ENCODE measurements at regions of chr15 and their contacts with region 1.

Region 1: GRCh38 chr15:50260969-50261496 is 4.5 kb downstream of the HDC start:
- DNase-seq: no peak
- H3K4me3 Mint-ChIP-seq: peak overlapping the region; percentile 64
- H3K27ac Mint-ChIP-seq: peak overlapping the region; percentile 98
- H3K4me1 Mint-ChIP-seq: peaks cover 76% of the 10 kb centered on the region
- H3K27me3 Mint-ChIP-seq: no peaks in the 10 kb centered on the region

Region 2: GRCh38 chr15:48877630-48878595 is 1383.1 kb before region 1 on chr15 and contains the start of gene EID1:
- intact Hi-C with region 1: loop called (anchors 5 kb)
- DNase-seq: peak; percentile 95
- H3K4me3 Mint-ChIP-seq: peak within 1 kb of the TSS; percentile 95
- H3K27ac Mint-ChIP-seq: peak within 1 kb of the TSS; percentile 95
- H3K4me1 Mint-ChIP-seq: peaks cover 56% of the 10 kb centered on the region
- H3K27me3 Mint-ChIP-seq: no peaks in the 10 kb centered on the region
- total RNA-seq, gene EID1: 168 and 202 TPM in 2 replicates

Region 3: DNA sequence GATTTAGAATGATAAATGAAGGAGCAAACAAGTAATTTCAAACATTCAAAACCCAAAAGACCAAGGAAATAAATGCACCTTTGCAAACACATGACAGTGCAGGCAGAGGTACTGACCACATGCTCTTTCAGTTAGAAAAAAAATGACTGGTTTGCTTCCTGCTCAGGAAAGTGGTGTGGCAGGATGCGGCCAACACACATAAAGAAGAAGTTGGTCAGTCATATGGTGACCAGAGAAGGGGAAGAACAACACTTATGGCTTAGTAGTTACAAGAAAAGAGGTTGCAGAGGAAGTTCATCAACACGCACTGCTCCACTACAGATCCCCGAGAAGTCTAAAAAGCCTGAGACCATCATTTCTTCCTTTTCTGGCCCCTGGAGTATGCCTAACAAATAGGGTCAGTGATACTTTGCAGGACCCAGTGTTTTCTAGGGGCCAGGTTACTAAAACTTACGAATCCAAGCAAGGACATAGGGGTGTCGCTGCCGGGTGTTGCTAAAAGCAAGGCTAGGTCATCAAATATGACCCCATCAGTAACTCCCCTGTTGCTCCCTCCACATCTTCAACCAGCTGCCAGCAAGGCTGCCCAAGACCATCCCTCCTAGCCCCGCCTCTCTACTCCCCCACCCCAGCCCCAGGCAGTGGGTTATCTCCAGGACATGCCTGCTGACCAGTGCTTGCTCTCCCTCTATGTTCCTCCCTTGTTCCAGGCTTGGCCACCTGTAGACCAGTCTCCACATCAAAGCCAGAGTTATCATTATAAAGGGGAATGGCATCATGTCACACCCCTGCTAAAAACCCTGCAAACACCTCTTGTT is 153.2 kb before region 1 on chr15:
- intact Hi-C with region 1: loop called (anchors 2 kb)
- DNase-seq: peak; percentile 29
- H3K4me3 Mint-ChIP-seq: peak overlapping the region; percentile 61
- H3K27ac Mint-ChIP-seq: peak overlapping the region; percentile 94
- H3K4me1 Mint-ChIP-seq: peaks cover 83% of the 10 kb centered on the region
- H3K27me3 Mint-ChIP-seq: no peaks in the 10 kb centered on the region

Region 4: GRCh38 chr15:50182219-50183013 is 78.6 kb before region 1 on chr15:
- intact Hi-C with region 1: loop called (anchors 1 kb)
- DNase-seq: peak; percentile 53
- H3K4me3 Mint-ChIP-seq: peak overlapping the region; percentile 98
- H3K27ac Mint-ChIP-seq: peak overlapping the region; percentile 96
- H3K4me1 Mint-ChIP-seq: peaks cover 44% of the 10 kb centered on the region
- H3K27me3 Mint-ChIP-seq: no peaks in the 10 kb centered on the region

Region 5: GRCh38 chr15:50275908-50276307 is 14.9 kb after region 1 on chr15:
- intact Hi-C with region 1: loop called (anchors 1 kb)
- DNase-seq: no peak
- H3K4me3 Mint-ChIP-seq: no peak overlapping the region
- H3K27ac Mint-ChIP-seq: peak overlapping the region; percentile 40
- H3K4me1 Mint-ChIP-seq: peaks cover 25% of the 10 kb centered on the region
- H3K27me3 Mint-ChIP-seq: no peaks in the 10 kb centered on the region

Region 6: DNA sequence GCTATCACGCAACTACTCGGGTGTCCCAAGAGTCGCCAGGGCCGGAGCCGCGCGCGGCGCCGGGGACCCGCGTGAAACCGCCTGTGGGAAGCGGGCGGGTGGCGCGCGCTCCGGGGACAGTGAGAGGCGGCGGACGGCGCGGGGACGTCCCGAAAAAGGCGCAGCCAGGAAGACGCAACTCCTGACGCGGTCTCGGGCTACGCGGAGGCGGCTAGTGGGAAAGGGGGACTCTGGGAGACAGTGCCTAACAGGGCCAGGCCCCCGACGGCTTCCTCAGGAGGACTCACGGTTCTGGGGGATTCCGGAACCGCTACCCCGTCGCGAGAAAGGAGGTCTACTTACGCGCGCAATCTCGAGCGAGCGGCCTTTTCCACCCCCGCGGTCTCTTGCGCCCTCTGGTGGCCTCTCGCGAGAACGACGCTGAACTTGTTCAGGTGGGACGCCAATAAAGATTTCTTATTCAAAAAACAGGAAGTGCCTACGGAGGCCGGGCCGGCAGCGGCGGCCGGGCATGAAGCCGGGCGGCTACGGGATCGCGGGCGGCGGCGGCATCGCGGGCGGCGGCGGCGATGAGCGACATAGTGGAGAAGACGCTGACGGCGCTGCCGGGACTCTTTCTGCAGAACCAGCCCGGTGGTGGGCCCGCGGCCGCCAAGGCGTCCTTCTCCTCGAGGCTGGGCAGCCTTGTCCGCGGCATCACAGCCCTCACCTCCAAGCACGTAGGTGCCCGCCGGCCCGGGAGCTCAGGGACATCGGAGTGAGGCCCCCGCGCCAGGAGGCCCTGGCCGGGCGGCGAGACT is 647.4 kb after region 1 on chr15 and contains the start of gene AP4E1:
- intact Hi-C with region 1: loop called (anchors 1 kb)
- DNase-seq: peak; percentile 93
- H3K4me3 Mint-ChIP-seq: peak within 1 kb of the TSS; percentile 97
- H3K27ac Mint-ChIP-seq: peak within 1 kb of the TSS; percentile 99
- H3K4me1 Mint-ChIP-seq: peaks cover 14% of the 10 kb centered on the region
- H3K27me3 Mint-ChIP-seq: no peaks in the 10 kb centered on the region
- total RNA-seq, gene AP4E1: 16.7 and 17.9 TPM in 2 replicates